ENCODE measurements at regions of chr5 and their contacts with region 1.

Region 1: DNA sequence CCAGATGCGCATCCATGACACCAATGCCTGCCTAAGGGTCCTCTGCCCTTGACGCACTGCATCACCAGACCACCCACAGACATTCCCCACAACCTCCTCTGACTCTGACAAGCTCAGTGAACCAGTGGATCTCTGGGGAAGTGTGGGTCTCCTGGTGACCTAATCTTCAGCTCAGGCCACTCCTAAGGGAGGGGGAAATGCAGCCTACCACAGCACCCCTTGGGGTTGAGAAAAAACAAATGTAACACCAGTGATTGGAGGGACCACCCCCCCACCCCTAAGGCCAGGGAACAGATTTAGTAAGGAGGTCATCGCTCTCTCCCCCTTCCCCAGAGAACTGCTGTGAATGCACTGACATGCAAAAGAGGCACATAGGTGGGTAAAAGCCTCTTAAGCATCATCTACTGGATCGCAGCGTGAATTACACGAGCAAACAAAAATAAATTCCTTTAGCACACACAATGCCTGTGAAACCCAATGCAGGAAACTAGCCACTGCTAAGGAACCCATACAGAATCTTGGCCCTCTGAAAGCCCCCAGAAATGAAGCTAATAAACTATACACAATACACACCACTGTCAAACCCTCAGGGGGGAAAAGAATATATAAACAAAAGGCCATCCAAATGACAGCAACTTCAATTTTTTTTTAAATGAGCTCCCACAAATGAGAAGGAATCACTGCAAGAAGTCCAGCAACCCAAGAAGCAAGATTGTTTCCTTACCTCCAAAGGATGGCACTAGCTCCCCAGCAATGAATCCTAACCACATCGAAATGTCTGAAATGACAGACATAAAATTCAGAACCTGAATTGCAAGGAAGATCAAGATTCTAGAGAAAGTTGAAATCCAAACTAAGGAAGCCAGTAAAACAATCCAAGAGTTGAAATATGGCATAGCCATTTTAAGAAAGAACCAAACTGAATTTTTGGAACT is 513.7 kb upstream of the PTGER4 start:
- DNase-seq: no peak
- H3K4me3 Mint-ChIP-seq: no peak overlapping the region
- H3K27ac Mint-ChIP-seq: no peak overlapping the region
- H3K4me1 Mint-ChIP-seq: peaks cover 17% of the 10 kb centered on the region
- H3K27me3 Mint-ChIP-seq: no peaks in the 10 kb centered on the region

Region 2: GRCh38 chr5:40404613-40405012 is 238.6 kb after region 1 on chr5:
- intact Hi-C with region 1: loop called (anchors 5 kb)
- DNase-seq: peak; percentile 12
- H3K4me3 Mint-ChIP-seq: peak overlapping the region; percentile 59
- H3K27ac Mint-ChIP-seq: peak overlapping the region; percentile 99
- H3K4me1 Mint-ChIP-seq: peaks cover 86% of the 10 kb centered on the region
- H3K27me3 Mint-ChIP-seq: no peaks in the 10 kb centered on the region